SK-N-SH (cell line): ENCODE measurements at regions of chr11 and their contacts with region 1.

Region 1: DNA sequence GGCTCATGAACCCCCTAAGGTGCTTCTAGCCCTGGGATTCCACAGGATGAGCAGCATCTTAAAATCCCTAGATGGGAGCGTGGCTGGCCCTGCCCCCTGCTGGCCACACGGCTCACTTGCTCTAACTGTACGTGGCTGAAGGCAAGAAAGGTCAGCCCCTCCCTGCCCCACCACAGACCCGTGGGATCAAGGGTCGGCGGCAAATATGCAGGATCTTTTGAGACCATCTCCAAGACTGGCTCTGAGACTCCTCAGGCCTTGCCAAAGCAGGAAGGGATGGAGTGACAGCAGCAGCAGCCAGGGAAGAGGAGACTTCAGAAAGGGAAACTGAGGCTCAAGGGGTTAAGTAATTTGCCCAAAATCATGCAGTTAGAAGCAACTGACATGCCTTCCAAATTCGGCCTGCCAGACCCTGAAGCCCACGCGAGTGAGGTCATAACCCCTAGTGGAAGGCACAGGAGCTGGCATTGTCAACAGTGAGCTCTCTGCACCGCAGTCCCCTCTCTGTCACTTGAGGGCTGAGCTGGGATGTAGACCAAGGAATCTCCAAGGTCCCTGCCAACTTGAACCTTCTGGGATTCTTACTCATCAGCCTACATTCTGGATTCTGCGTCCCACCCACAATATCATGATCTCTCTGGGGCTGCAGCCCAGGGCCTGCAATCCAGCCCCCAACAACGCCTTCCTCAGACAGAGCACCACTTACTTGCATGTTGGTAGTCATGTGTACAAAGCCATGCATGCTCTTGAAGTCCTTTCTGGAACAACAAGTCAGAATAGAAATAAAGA is 31.4 kb downstream of the CREB3L1 start:
- DNase-seq: peak; percentile 92
- H3K4me3 ChIP-seq: peak overlapping the region in 1 of 2 experiments; percentile 35; a peak in 1 of 4 replicates
- H3K27ac ChIP-seq: 0 out of 4 replicates have a peak overlapping the region, but pooled peaks of 1 of the 2 experiments have one; percentile 15
- H3K4me1 ChIP-seq: peaks cover 0 to 2% of the 10 kb centered on the region in 2 experiments; a peak in 1 of 4 replicates
- H3K27me3 ChIP-seq: no peaks in the 10 kb centered on the region
- CTCF ChIP-seq: peak; percentile 93
- EP300 ChIP-seq: no peak
- RAD21 ChIP-seq: peak; percentile 89

Region 2: GRCh38 chr11:46055371-46055770 is 253.5 kb before region 1 on chr11:
- CTCF ChIA-PET with region 1: no interaction called
- POLR2A ChIA-PET with region 1: no interaction called
- DNase-seq: no peak
- H3K4me3 ChIP-seq: no peak overlapping the region
- H3K27ac ChIP-seq: no peak overlapping the region
- H3K4me1 ChIP-seq: peaks cover 13 to 15% of the 10 kb centered on the region in 2 experiments
- H3K27me3 ChIP-seq: no peaks in the 10 kb centered on the region
- CTCF ChIP-seq: no peak
- EP300 ChIP-seq: no peak
- RAD21 ChIP-seq: no peak

Region 3: GRCh38 chr11:46249103-46249937 is 59.5 kb before region 1 on chr11:
- CTCF ChIA-PET with region 1: interaction called, 459 read pairs
- POLR2A ChIA-PET with region 1: no interaction called
- DNase-seq: no peak
- H3K4me3 ChIP-seq: no peak overlapping the region
- H3K27ac ChIP-seq: peak overlapping the region; percentile 3 to 100; a peak in 3 of 4 replicates
- H3K4me1 ChIP-seq: peaks cover 5 to 47% of the 10 kb centered on the region in 2 experiments; a peak in 3 of 4 replicates
- H3K27me3 ChIP-seq: no peaks in the 10 kb centered on the region
- CTCF ChIP-seq: no peak
- EP300 ChIP-seq: no peak
- RAD21 ChIP-seq: no peak

Region 4: GRCh38 chr11:46278387-46279125 is 30.3 kb before region 1 on chr11:
- CTCF ChIA-PET with region 1: interaction called, 21 read pairs
- POLR2A ChIA-PET with region 1: no interaction called
- DNase-seq: peak; percentile 77
- H3K4me3 ChIP-seq: peak overlapping the region; percentile 76 to 87
- H3K27ac ChIP-seq: peak overlapping the region; percentile 8 to 84; a peak in 3 of 4 replicates
- H3K4me1 ChIP-seq: peaks cover 26 to 33% of the 10 kb centered on the region in 2 experiments
- H3K27me3 ChIP-seq: no peaks in the 10 kb centered on the region
- CTCF ChIP-seq: peak; percentile 84
- EP300 ChIP-seq: no peak
- RAD21 ChIP-seq: peak; percentile 26; the same call in 1 of the 2 replicates

Region 5: DNA sequence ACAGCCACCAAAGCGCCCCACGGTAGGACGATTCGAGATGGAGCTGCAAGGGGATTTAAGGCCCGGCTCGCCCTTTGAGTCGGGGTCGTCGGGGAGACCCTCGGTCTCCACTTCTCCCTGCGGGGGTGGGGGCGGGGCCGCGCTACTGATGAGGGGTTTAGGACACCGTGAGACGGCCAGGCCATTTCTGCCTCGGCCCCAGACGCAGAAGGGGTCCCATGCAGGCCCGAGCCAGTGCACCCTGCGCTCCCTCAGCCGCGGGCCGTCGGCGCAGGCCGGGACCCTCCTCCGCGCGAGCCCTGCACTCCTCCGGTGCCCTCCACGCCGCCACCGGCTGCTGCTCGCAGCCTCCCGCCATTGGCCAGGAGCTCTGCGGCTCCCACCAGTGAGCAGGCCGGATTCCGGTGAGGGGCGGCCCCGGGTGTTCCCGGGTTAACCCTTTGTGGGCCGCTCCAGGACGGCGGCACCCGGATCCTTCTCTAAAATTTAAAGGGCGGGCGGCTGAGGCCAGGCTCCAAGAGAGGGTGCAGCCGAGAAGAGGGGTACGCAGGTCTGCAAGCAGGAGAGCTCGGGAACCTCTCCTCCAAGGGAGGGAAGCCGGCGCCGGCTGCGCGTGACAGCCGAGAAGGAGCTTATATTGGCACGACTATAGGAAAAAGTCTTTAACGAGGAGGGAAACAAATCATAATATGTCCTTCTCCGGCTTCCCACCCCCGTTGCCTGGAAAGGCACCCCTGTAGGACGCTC is 13.3 kb before region 1 on chr11:
- CTCF ChIA-PET with region 1: interaction called, 20 read pairs
- POLR2A ChIA-PET with region 1: no interaction called
- DNase-seq: peak; percentile 99
- H3K4me3 ChIP-seq: peak overlapping the region; percentile 59 to 65
- H3K27ac ChIP-seq: peak overlapping the region; percentile 84 to 95
- H3K4me1 ChIP-seq: peaks cover 18 to 63% of the 10 kb centered on the region in 2 experiments
- H3K27me3 ChIP-seq: no peaks in the 10 kb centered on the region
- CTCF ChIP-seq: no peak
- EP300 ChIP-seq: peak in 1 of 2 experiments; percentile 15; a peak in 1 of 4 replicates
- RAD21 ChIP-seq: no peak

Region 6: GRCh38 chr11:46338988-46339666 is 30.3 kb after region 1 on chr11:
- CTCF ChIA-PET with region 1: interaction called, 16 read pairs
- POLR2A ChIA-PET with region 1: no interaction called
- DNase-seq: no peak
- H3K4me3 ChIP-seq: no peak overlapping the region
- H3K27ac ChIP-seq: no peak overlapping the region
- H3K4me1 ChIP-seq: peaks cover 9 to 13% of the 10 kb centered on the region in 2 experiments; a peak in 3 of 4 replicates
- H3K27me3 ChIP-seq: no peaks in the 10 kb centered on the region
- CTCF ChIP-seq: no peak
- EP300 ChIP-seq: no peak
- RAD21 ChIP-seq: no peak